ENCODE measurements at regions of chr11 and their contacts with region 1.

Region 1: GRCh38 chr11:44911029-44911814 is 39.5 kb downstream of the TP53I11 start:
- DNase-seq: no peak
- ATAC-seq: peak; percentile 95
- H3K4me3 ChIP-seq: no peak overlapping the region
- H3K27ac ChIP-seq: no peak overlapping the region
- H3K4me1 ChIP-seq: peaks cover 4% of the 10 kb centered on the region
- H3K27me3 ChIP-seq: no peaks in the 10 kb centered on the region; a peak in 1 of 4 replicates
- CTCF ChIP-seq: peak; percentile 68 to 77 (median 76)
- EP300 ChIP-seq: no peak
- POLR2A ChIP-seq: no peak
- RAD21 ChIP-seq: peak; percentile 83

Region 2: GRCh38 chr11:44658506-44658850 is 252.7 kb before region 1 on chr11:
- CTCF ChIA-PET with region 1: no interaction called
- POLR2A ChIA-PET with region 1: no interaction called
- RAD21 ChIA-PET with region 1: no interaction called
- SMC1A ChIA-PET with region 1: interaction called, 4 read pairs
- in situ Hi-C with region 1: no loop called
- intact Hi-C with region 1: loop called (anchors 10 kb)
- DNase-seq: no peak
- ATAC-seq: peak; percentile 38; the same call in 1 of the 3 replicates
- H3K4me3 ChIP-seq: no peak overlapping the region
- H3K27ac ChIP-seq: no peak overlapping the region
- H3K4me1 ChIP-seq: no peaks in the 10 kb centered on the region
- H3K27me3 ChIP-seq: no peaks in the 10 kb centered on the region; a peak in 1 of 4 replicates
- CTCF ChIP-seq: peak; percentile 19 to 44 (median 36); a peak in 4 of 6 replicates
- EP300 ChIP-seq: no peak
- POLR2A ChIP-seq: no peak
- RAD21 ChIP-seq: peak; percentile 11; the same call in 1 of the 2 replicates

Region 3: GRCh38 chr11:44727373-44728287 is 183.6 kb before region 1 on chr11:
- CTCF ChIA-PET with region 1: interaction called, 8 read pairs
- POLR2A ChIA-PET with region 1: no interaction called
- RAD21 ChIA-PET with region 1: interaction called, 7 read pairs
- SMC1A ChIA-PET with region 1: interaction called, 4 read pairs
- in situ Hi-C with region 1: loop called (anchors 10 kb)
- intact Hi-C with region 1: loop called (anchors 1 kb)
- DNase-seq: no peak
- ATAC-seq: peak; percentile 90
- H3K4me3 ChIP-seq: peak overlapping the region; percentile 86
- H3K27ac ChIP-seq: no peak overlapping the region
- H3K4me1 ChIP-seq: peaks cover 11% of the 10 kb centered on the region
- H3K27me3 ChIP-seq: peaks cover 0 to 3% of the 10 kb centered on the region in 2 experiments; a peak in 3 of 4 replicates
- CTCF ChIP-seq: peak; percentile 77 to 95 (median 85)
- EP300 ChIP-seq: no peak
- POLR2A ChIP-seq: no peak
- RAD21 ChIP-seq: peak; percentile 61

Region 4: DNA sequence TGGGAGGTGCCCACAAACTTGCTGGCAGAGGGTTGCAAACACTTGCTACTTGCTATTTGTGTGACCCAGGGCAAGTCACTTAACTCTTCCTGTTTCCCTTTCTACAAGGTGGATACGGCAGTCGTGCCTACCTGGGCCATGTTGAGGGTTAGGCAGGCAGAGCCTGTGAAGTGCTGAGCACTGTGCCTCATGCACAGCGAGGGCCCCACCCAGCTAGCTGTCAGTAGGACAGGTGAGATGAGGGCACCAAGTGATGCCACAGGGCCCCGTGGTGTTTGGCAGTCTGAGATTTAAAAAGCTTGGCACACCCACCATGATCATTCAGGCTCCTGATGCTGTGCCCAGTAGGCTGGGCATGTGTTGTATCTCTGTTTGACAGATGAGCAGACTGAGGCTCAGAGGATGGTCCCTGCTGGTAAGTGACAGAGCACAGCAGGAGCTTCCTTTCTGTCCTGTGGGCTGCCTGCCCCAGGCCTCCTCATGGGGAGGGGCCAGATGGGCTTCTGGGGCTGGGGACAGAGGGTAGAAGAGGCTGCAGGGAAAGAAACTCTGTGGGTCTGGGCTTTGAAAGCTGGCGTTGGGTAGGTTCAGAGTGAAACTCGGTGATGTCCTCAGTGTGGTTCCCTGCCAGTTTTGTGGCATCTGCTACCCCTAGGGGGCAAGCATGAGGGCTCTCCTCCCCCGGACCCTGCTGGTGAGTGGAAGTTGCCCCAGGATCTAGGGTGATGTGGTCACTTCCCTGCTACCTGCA is 125.2 kb before region 1 on chr11:
- CTCF ChIA-PET with region 1: interaction called, 3 read pairs
- POLR2A ChIA-PET with region 1: no interaction called
- RAD21 ChIA-PET with region 1: interaction called, 3 read pairs
- SMC1A ChIA-PET with region 1: interaction called, 3 read pairs
- in situ Hi-C with region 1: no loop called
- intact Hi-C with region 1: loop called (anchors 1 kb)
- DNase-seq: no peak
- ATAC-seq: peak; percentile 73
- H3K4me3 ChIP-seq: no peak overlapping the region
- H3K27ac ChIP-seq: no peak overlapping the region
- H3K4me1 ChIP-seq: no peaks in the 10 kb centered on the region
- H3K27me3 ChIP-seq: no peaks in the 10 kb centered on the region; a peak in 1 of 4 replicates
- CTCF ChIP-seq: peak; percentile 2 to 43 (median 13); a peak in 1 of 6 replicates
- EP300 ChIP-seq: no peak
- POLR2A ChIP-seq: no peak
- RAD21 ChIP-seq: no peak

Region 5: DNA sequence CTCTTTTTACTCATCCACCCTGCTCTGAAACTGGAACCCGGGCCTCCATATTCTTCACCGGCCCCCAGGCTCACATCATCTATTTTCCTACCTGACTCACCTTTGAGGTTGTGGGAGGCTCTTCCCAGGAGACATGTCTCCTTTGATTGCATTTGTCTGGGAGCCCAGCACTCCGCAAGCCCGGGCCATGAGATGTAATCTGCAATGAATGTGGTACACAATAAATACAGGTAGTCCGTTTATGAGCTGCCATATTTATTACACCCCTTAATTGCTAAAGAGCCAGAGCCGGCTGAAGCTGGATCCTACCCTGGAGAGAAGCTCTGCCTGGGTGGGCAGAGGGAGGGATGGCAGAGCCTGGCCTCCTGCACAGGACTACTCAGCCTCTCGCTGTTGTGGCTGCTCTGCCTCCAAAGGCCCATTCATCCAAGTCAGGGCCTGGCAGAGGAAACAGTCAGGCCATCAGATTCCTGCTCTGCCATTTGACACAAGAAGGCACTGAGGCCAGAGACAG is 10.0 kb before region 1 on chr11:
- CTCF ChIA-PET with region 1: interaction called, 13 read pairs
- POLR2A ChIA-PET with region 1: no interaction called
- RAD21 ChIA-PET with region 1: interaction called, 3 read pairs
- SMC1A ChIA-PET with region 1: interaction called, 3 read pairs
- in situ Hi-C with region 1: no loop called
- intact Hi-C with region 1: no loop called
- DNase-seq: no peak
- ATAC-seq: no peak
- H3K4me3 ChIP-seq: no peak overlapping the region
- H3K27ac ChIP-seq: no peak overlapping the region
- H3K4me1 ChIP-seq: no peaks in the 10 kb centered on the region
- H3K27me3 ChIP-seq: peaks cover 0 to 3% of the 10 kb centered on the region in 2 experiments; a peak in 2 of 4 replicates
- CTCF ChIP-seq: no peak
- EP300 ChIP-seq: no peak
- POLR2A ChIP-seq: no peak
- RAD21 ChIP-seq: no peak

Region 6: DNA sequence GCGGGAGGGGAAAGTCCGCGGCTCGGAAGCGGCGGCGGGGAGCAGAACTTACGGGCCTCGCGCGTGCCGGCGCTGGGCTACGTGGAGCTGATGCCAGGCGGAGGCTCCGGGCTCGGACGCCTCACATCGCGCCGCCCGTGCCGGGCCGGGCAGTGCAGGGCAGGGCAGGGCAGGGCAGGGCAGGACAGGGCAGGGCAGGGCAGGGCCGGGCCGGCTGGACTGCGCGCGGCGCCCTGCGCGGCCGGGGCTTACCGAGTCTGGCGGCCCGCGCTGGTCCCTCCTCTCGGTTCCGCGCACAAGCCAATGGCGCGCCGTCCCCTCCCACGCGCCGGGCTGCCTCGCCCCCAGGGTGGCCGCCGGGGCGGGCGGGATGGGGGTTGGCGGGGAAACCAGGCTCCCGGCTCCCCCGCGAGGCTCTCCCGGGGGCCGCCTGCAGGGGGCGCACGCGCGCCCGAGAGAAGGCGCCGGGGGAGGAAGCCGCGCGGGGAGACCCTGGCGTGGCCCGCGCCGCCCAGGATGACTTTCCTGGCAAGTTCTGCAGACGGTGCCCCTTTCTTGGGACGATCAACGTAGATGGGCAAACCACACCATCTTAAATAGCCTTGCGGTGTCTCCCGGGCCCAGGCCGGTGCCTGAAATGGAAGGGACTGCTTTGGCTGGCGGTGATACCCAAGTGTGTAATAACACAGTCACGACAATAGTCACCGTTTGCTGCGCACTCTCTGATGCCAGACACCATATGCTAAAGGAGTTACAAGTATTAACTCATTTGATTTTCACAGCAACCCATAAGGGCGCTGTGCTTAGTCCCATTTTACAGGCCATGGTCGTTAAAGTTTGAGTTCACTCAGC is 39.6 kb after region 1 on chr11 and contains the start of gene TP53I11:
- CTCF ChIA-PET with region 1: no interaction called
- POLR2A ChIA-PET with region 1: no interaction called
- RAD21 ChIA-PET with region 1: no interaction called
- SMC1A ChIA-PET with region 1: no interaction called
- in situ Hi-C with region 1: no loop called
- intact Hi-C with region 1: no loop called
- DNase-seq: no peak
- ATAC-seq: peak; percentile 72
- H3K4me3 ChIP-seq: peak within 1 kb of the TSS; percentile 36; the same call in 1 of the 2 replicates
- H3K27ac ChIP-seq: no peak within 1 kb of the TSS
- H3K4me1 ChIP-seq: no peaks in the 10 kb centered on the region
- H3K27me3 ChIP-seq: peaks cover 0 to 6% of the 10 kb centered on the region in 2 experiments; a peak in 3 of 4 replicates
- CTCF ChIP-seq: peak; percentile 7 to 43 (median 25); a peak in 2 of 6 replicates
- EP300 ChIP-seq: no peak
- POLR2A ChIP-seq: no peak
- RAD21 ChIP-seq: no peak
- polyA plus RNA-seq, gene TP53I11: not detected

Measured in GM12878 (cell line).